MCF 10A (cell line): ENCODE measurements at regions of chr6 and their contacts with region 1.

Region 1: GRCh38 chr6:24766680-24767462 is 7.9 kb upstream of the GMNN start:
- DNase-seq: peak; percentile 45
- H3K4me3 Mint-ChIP-seq: no peak overlapping the region
- H3K27ac Mint-ChIP-seq: no peak overlapping the region
- H3K4me1 Mint-ChIP-seq: peaks cover 11% of the 10 kb centered on the region
- H3K27me3 Mint-ChIP-seq: no peaks in the 10 kb centered on the region
- CTCF ChIP-seq: peak; percentile 58

Region 2: GRCh38 chr6:24431045-24431451 is 335.8 kb before region 1 on chr6:
- CTCF ChIA-PET with region 1: no interaction called
- POLR2A ChIA-PET with region 1: no interaction called
- intact Hi-C with region 1: loop called (anchors 2 kb)
- DNase-seq: peak; percentile 69
- H3K4me3 Mint-ChIP-seq: no peak overlapping the region
- H3K27ac Mint-ChIP-seq: no peak overlapping the region
- H3K4me1 Mint-ChIP-seq: peaks cover 6% of the 10 kb centered on the region
- H3K27me3 Mint-ChIP-seq: no peaks in the 10 kb centered on the region
- CTCF ChIP-seq: peak; percentile 27

Region 3: GRCh38 chr6:24689964-24690363 is 76.9 kb before region 1 on chr6:
- CTCF ChIA-PET with region 1: interaction called, 5 read pairs
- POLR2A ChIA-PET with region 1: no interaction called
- intact Hi-C with region 1: loop called (anchors 2 kb)
- DNase-seq: no peak
- H3K4me3 Mint-ChIP-seq: no peak overlapping the region
- H3K27ac Mint-ChIP-seq: no peak overlapping the region
- H3K4me1 Mint-ChIP-seq: peaks cover 6% of the 10 kb centered on the region
- H3K27me3 Mint-ChIP-seq: no peaks in the 10 kb centered on the region
- CTCF ChIP-seq: no peak

Region 4: GRCh38 chr6:24743265-24743943 is 23.5 kb before region 1 on chr6:
- CTCF ChIA-PET with region 1: interaction called, 6 read pairs
- POLR2A ChIA-PET with region 1: interaction called, 25 read pairs
- intact Hi-C with region 1: no loop called
- DNase-seq: peak; percentile 94
- H3K4me3 Mint-ChIP-seq: peak overlapping the region; percentile 46
- H3K27ac Mint-ChIP-seq: peak overlapping the region; percentile 74
- H3K4me1 Mint-ChIP-seq: peaks cover 29% of the 10 kb centered on the region
- H3K27me3 Mint-ChIP-seq: no peaks in the 10 kb centered on the region
- CTCF ChIP-seq: no peak

Region 5: GRCh38 chr6:25485821-25486534 is 719.1 kb after region 1 on chr6:
- CTCF ChIA-PET with region 1: no interaction called
- POLR2A ChIA-PET with region 1: no interaction called
- intact Hi-C with region 1: no loop called
- DNase-seq: no peak
- H3K4me3 Mint-ChIP-seq: no peak overlapping the region
- H3K27ac Mint-ChIP-seq: no peak overlapping the region
- H3K4me1 Mint-ChIP-seq: peaks cover 8% of the 10 kb centered on the region
- H3K27me3 Mint-ChIP-seq: no peaks in the 10 kb centered on the region
- CTCF ChIP-seq: no peak